Right ventricle myocardium superior (tissue), 1 donor: ENCODE measurements at regions of chr5 and their contacts with region 1.

Region 1: GRCh38 chr5:32489791-32490582 is 45.4 kb upstream of the ZFR start:
- DNase-seq: peak; percentile 86
- ATAC-seq: peak; percentile 80

Region 2: GRCh38 chr5:32572778-32573480 is 82.9 kb after region 1 on chr5:
- intact Hi-C with region 1: no loop called
- DNase-seq: no peak
- ATAC-seq: no peak

Region 3: GRCh38 chr5:32585446-32586275 is 95.7 kb after region 1 on chr5 and contains the start of gene SUB1:
- intact Hi-C with region 1: loop called (anchors 5 kb)
- DNase-seq: peak; percentile 97
- ATAC-seq: peak; percentile 98
- total RNA-seq, gene SUB1: 175 TPM

Region 4: DNA sequence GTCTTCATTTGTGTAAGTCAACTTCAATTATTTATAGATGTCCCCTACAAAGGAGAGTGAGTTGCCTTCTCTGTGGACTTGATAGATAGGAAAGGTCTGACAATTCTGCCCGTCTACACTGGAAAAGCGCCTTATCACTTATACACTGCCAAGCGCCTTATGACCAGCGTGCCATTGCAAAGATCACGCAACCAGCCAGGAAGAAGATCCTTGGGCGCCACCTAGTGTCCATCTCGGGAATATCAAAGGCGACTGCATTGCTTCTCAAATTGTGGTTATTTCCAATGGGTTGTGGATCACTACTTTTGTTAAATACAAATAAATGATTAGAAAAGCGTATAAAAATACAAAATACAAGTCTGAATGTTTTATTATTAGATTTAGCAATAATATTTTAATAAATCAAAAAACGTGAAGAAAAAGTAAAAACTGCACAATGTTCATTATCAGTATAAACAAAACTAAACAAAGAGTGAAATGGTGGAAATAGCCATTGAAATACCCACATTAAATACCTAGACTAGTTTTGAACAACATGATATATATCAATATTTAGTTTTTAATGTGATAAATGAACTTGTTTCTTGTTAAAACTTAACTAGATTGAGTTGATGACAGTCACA is 123.2 kb after region 1 on chr5:
- intact Hi-C with region 1: loop called (anchors 5 kb)
- DNase-seq: peak; percentile 86
- ATAC-seq: peak; percentile 76